Activated CD4-positive, alpha-beta T cell treated with anti-CD3 and anti-CD28 coated beads, Interleukin-2, amount 10 ng/mL, durations not matched to agents 24 days and 14 days (primary cell): ENCODE measurements at regions of chr12 and their contacts with region 1.

Region 1: GRCh38 chr12:48084066-48084465 is 21.8 kb downstream of the SENP1 start:
- DNase-seq: no peak
- H3K4me3 Mint-ChIP-seq: no peak overlapping the region
- H3K27ac Mint-ChIP-seq: no peak overlapping the region
- H3K4me1 Mint-ChIP-seq: no peaks in the 10 kb centered on the region
- H3K27me3 Mint-ChIP-seq: no peaks in the 10 kb centered on the region

Region 2: DNA sequence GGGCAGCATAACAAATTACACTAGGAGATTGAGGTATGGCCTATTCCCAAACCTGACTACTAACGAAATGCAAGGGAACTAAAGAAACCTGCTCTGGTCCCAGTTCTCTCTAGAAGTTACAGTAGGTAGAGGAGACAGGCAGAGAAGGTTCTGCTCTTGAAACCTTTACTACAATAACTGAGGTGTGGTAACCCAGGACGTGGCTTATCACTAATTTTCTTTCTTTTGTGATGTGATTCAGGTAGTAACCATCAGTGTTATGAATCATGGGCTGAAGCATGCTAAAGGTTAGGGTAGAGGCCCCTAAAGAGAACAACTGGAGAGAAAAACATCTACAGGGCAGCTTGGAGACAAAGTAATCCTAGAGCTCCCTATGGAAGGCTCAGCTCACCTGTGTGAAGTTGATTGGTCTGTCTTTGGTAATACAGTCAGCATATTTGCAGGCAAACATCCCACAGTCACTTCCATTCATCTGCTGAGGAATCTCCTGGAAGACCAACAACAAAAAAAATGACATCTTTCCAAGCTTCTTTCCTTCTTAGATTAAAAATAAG is 38.0 kb before region 1 on chr12:
- intact Hi-C with region 1: no loop called
- DNase-seq: no peak
- H3K4me3 Mint-ChIP-seq: no peak overlapping the region
- H3K27ac Mint-ChIP-seq: no peak overlapping the region
- H3K4me1 Mint-ChIP-seq: no peaks in the 10 kb centered on the region
- H3K27me3 Mint-ChIP-seq: no peaks in the 10 kb centered on the region

Region 3: GRCh38 chr12:48165094-48165981 is 81.3 kb after region 1 on chr12:
- intact Hi-C with region 1: loop called (anchors 5 kb)
- DNase-seq: peak; percentile 88
- H3K4me3 Mint-ChIP-seq: no peak overlapping the region
- H3K27ac Mint-ChIP-seq: no peak overlapping the region
- H3K4me1 Mint-ChIP-seq: no peaks in the 10 kb centered on the region
- H3K27me3 Mint-ChIP-seq: peaks cover 30% of the 10 kb centered on the region